ENCODE measurements at regions of chr2 and their contacts with region 1.

Region 1: DNA sequence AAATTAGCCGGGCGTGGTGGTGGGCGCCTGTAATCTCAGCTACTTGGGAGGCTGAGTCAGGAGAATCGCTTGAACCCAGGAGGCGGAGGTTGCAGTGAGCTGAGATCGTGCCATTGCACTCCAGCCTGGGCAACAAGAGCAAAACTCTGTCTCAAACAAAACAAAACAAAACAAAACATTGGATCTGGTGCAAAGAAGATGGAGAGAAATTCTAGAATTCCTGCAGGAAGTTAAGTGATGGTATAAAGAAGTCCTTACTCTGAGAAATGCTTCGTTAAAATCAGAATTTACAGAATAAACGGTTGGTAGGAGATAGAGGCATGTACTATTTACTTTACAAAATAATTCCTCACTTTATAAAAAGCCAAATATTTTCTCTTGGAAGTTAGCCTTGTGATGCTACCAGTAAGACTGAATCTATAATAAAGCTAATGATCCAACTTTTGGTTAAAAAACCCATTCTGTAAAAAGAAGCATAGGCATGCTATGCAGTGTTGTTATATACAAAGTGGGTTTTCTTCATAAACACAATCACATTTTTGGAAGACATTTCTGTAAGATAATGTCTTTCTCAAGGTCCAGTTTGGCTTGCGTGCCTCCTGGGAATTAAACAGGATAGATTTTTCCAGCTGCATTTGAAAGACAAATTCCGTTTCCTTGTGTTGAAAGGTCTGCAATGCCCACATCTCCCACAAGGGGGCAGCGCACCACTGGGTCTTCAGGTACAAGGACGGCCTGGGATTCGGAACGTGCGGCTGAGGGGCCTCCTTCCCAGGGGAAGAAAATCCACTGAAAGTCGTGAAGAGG is 35.6 kb upstream of the PNO1 start:
- DNase-seq: peak; percentile 86 to 90
- ATAC-seq: peak; percentile 72 to 94 (median 88)
- H3K4me3 ChIP-seq: peak overlapping the region; percentile 3
- H3K27ac ChIP-seq: no peak overlapping the region
- H3K4me1 ChIP-seq: peaks cover 4% of the 10 kb centered on the region
- H3K27me3 ChIP-seq: no peaks in the 10 kb centered on the region
- CTCF ChIP-seq: peak; percentile 96

Region 2: GRCh38 chr2:67871686-67872412 is 250.2 kb before region 1 on chr2:
- intact Hi-C with region 1: no loop called
- DNase-seq: no peak
- ATAC-seq: peak in 2 of 4 donors; percentile 24 to 37
- H3K4me3 ChIP-seq: no peak overlapping the region
- H3K27ac ChIP-seq: peak overlapping the region; percentile 1
- H3K4me1 ChIP-seq: no peaks in the 10 kb centered on the region
- H3K27me3 ChIP-seq: peaks cover 0 to 5% (median 0%) of the 10 kb centered on the region in 3 donors
- CTCF ChIP-seq: no peak

Region 3: GRCh38 chr2:68169297-68169696 is 47.2 kb after region 1 on chr2:
- intact Hi-C with region 1: no loop called
- DNase-seq: no peak
- ATAC-seq: no peak
- H3K4me3 ChIP-seq: no peak overlapping the region
- H3K27ac ChIP-seq: no peak overlapping the region
- H3K4me1 ChIP-seq: no peaks in the 10 kb centered on the region
- H3K27me3 ChIP-seq: no peaks in the 10 kb centered on the region
- CTCF ChIP-seq: no peak

Region 4: GRCh38 chr2:68282811-68283418 is 160.8 kb after region 1 on chr2:
- intact Hi-C with region 1: loop called (anchors 5 kb)
- DNase-seq: no peak
- ATAC-seq: peak in 3 of 4 donors; percentile 57 to 76 (median 64)
- H3K4me3 ChIP-seq: no peak overlapping the region
- H3K27ac ChIP-seq: no peak overlapping the region
- H3K4me1 ChIP-seq: peaks cover 37% of the 10 kb centered on the region
- H3K27me3 ChIP-seq: no peaks in the 10 kb centered on the region
- CTCF ChIP-seq: peak; percentile 79

Region 5: GRCh38 chr2:68362069-68362468 is 240.0 kb after region 1 on chr2:
- intact Hi-C with region 1: loop called in 1 of 2 experiments (anchors 5 kb)
- DNase-seq: peak; percentile 69 to 81
- ATAC-seq: peak; percentile 22 to 76 (median 38)
- H3K4me3 ChIP-seq: no peak overlapping the region
- H3K27ac ChIP-seq: no peak overlapping the region
- H3K4me1 ChIP-seq: no peaks in the 10 kb centered on the region
- H3K27me3 ChIP-seq: no peaks in the 10 kb centered on the region
- CTCF ChIP-seq: peak; percentile 63